ENCODE measurements at regions of chr5 and their contacts with region 1.

Region 1: GRCh38 chr5:134904630-134905245 is at the start of gene PCBD2:
- DNase-seq: peak; percentile 83 to 96 (median 90)
- ATAC-seq: peak; percentile 94
- H3K4me3 ChIP-seq: peak within 1 kb of the TSS; percentile 71
- H3K4me3 Mint-ChIP-seq: peak within 1 kb of the TSS; percentile 90 to 99 (median 96)
- H3K27ac ChIP-seq: peak within 1 kb of the TSS; percentile 90
- H3K27ac Mint-ChIP-seq: peak within 1 kb of the TSS; percentile 93 to 100 (median 99)
- H3K4me1 ChIP-seq: no peaks in the 10 kb centered on the region
- H3K4me1 Mint-ChIP-seq: peaks cover 0 to 25% (median 5%) of the 10 kb centered on the region in 7 donors
- H3K27me3 ChIP-seq: no peaks in the 10 kb centered on the region
- H3K27me3 Mint-ChIP-seq: no peaks in the 10 kb centered on the region
- total RNA-seq, gene PCBD2: 10.6 to 15.8 (median 14.3) TPM

Region 2: DNA sequence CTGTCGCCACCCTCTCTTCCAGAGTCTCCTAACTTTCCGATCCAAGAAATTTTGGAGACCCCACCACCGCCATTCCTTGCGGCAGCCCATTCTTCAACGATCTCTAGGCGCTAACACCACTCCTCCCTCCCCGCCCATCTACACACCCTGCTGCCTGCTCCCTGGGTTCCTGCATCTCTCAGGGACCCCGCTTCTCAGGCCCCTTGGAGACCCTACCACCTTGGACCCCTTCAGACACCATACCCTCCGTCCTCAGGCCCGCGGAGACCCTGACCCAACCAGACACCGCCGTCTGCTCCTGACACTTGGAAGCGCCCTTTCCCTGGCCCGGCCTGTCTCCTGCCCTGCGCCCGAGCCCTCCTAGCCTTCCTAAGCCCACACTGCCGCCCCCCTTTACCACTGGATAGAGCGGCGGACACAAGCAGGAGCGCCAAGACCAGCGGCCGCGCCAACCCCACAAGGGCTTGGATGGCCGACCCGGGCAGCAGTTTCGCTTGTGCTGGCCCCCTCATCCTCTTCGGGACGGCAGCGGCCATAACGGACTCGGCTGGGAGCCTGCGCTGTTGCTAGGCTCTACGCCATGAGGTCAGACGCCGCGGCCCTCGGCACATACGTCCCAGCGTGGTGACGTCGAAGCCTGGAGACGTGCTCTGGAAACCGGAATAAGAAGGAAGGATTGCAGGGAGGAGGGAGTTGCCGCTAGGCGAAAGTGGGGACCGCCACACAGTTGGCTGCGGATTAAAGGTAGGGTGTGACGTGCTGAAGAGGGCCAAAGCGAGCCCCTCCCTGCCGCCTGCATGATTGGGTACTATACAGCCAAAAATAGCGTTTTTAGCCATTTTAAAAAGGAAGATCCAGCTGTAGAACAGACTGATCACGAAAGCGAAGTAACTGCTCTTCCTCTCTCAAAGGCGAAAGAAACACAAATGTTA is 936.4 kb before region 1 on chr5 and contains the start of gene C5orf15:
- CTCF ChIA-PET with region 1: no interaction called
- POLR2A ChIA-PET with region 1: no interaction called
- intact Hi-C with region 1: loop called (anchors 2 to 10 kb)
- DNase-seq: peak; percentile 72 to 93 (median 87)
- ATAC-seq: peak; percentile 98
- H3K4me3 ChIP-seq: peak within 1 kb of the TSS; percentile 90
- H3K4me3 Mint-ChIP-seq: peak within 1 kb of the TSS; percentile 93 to 100 (median 98)
- H3K27ac ChIP-seq: peak within 1 kb of the TSS; percentile 94
- H3K27ac Mint-ChIP-seq: peak within 1 kb of the TSS; percentile 92 to 99 (median 97)
- H3K4me1 ChIP-seq: peaks cover 10 to 16% of the 10 kb centered on the region in 2 donors
- H3K4me1 Mint-ChIP-seq: peaks cover 21 to 63% (median 52%) of the 10 kb centered on the region in 7 donors
- H3K27me3 ChIP-seq: no peaks in the 10 kb centered on the region
- H3K27me3 Mint-ChIP-seq: no peaks in the 10 kb centered on the region
- total RNA-seq, gene C5orf15: 11.1 to 33.6 (median 17.9) TPM

Region 3: GRCh38 chr5:134586866-134587524 is 317.7 kb before region 1 on chr5:
- CTCF ChIA-PET with region 1: no interaction called
- POLR2A ChIA-PET with region 1: no interaction called
- intact Hi-C with region 1: loop called (anchors 2 kb)
- DNase-seq: peak; percentile 56 to 88 (median 76)
- ATAC-seq: peak; percentile 93
- H3K4me3 ChIP-seq: peak overlapping the region; percentile 11
- H3K4me3 Mint-ChIP-seq: peak overlapping the region in 8 of 10 donors; percentile 9 to 63 (median 25)
- H3K27ac ChIP-seq: no peak overlapping the region
- H3K27ac Mint-ChIP-seq: peak overlapping the region; percentile 22 to 84 (median 54)
- H3K4me1 ChIP-seq: peaks cover 4% of the 10 kb centered on the region in 2 donors
- H3K4me1 Mint-ChIP-seq: peaks cover 0 to 17% (median 9%) of the 10 kb centered on the region in 7 donors
- H3K27me3 ChIP-seq: no peaks in the 10 kb centered on the region
- H3K27me3 Mint-ChIP-seq: no peaks in the 10 kb centered on the region

Region 4: DNA sequence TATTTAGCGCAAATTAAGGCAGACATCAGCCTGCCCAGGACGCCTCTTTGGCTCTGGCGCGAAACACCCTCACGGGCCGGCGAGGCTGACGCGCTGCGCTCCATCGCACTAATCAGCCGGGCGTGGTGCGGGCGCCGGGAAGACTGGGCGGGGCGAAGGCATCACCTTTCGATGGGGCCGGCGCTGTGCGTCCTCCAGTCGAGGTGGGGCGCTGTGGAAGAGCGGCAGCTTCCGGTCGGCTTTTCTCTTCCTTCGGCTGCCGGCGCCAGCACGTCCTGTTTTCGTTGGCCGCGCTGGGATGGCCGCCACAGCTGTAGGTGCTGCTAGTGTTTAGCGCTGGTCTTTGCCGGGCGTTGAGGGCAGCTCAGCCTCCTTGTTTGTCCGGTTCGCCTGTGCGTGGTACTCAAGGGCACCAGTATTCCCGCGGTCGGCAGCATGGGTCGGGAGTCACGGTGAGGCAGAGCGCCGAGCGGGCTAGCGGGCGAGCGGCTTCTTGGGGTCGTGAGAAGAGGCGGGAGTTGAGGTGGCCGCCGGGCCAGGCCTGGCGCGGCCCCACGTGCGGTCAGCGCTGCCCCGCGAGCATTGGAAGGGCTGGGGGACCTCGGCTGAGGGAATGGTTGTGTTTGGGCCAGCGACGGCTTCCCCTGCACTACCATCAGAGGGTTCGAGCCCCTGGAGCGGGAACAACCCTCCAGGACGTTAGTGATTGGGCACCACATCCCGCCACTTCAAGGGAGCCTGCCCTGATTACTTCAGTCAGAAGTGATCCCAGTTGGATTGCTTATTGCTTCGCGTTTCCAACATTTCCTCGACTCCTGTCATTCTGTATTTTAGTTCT is 146.0 kb before region 1 on chr5 and contains the start of gene DDX46:
- CTCF ChIA-PET with region 1: interaction called, 4 read pairs
- POLR2A ChIA-PET with region 1: interaction called, 3 read pairs
- intact Hi-C with region 1: loop called (anchors 1 kb)
- DNase-seq: peak; percentile 85 to 95 (median 91)
- ATAC-seq: peak; percentile 99
- H3K4me3 ChIP-seq: peak within 1 kb of the TSS; percentile 75
- H3K4me3 Mint-ChIP-seq: peak within 1 kb of the TSS; percentile 92 to 100 (median 99)
- H3K27ac ChIP-seq: peak within 1 kb of the TSS; percentile 87
- H3K27ac Mint-ChIP-seq: peak within 1 kb of the TSS; percentile 93 to 99 (median 97)
- H3K4me1 ChIP-seq: peaks cover 12 to 13% of the 10 kb centered on the region in 2 donors
- H3K4me1 Mint-ChIP-seq: peaks cover 20 to 47% (median 38%) of the 10 kb centered on the region in 7 donors
- H3K27me3 ChIP-seq: no peaks in the 10 kb centered on the region
- H3K27me3 Mint-ChIP-seq: no peaks in the 10 kb centered on the region
- total RNA-seq, gene DDX46: 51.2 to 72.5 (median 64.2) TPM

Region 5: GRCh38 chr5:134845852-134846640 is 58.7 kb before region 1 on chr5 and contains the start of gene C5orf24:
- CTCF ChIA-PET with region 1: interaction called, 6 read pairs
- POLR2A ChIA-PET with region 1: interaction called, 37 read pairs
- intact Hi-C with region 1: loop called (anchors 1 kb)
- DNase-seq: peak; percentile 83 to 93 (median 90)
- ATAC-seq: peak; percentile 98
- H3K4me3 ChIP-seq: peak within 1 kb of the TSS; percentile 60
- H3K4me3 Mint-ChIP-seq: peak within 1 kb of the TSS; percentile 84 to 99 (median 94)
- H3K27ac ChIP-seq: peak within 1 kb of the TSS; percentile 96
- H3K27ac Mint-ChIP-seq: peak within 1 kb of the TSS; percentile 94 to 99 (median 97)
- H3K4me1 ChIP-seq: peaks cover 16 to 19% of the 10 kb centered on the region in 2 donors
- H3K4me1 Mint-ChIP-seq: peaks cover 12 to 42% (median 31%) of the 10 kb centered on the region in 7 donors
- H3K27me3 ChIP-seq: no peaks in the 10 kb centered on the region
- H3K27me3 Mint-ChIP-seq: no peaks in the 10 kb centered on the region
- total RNA-seq, gene C5orf24: 20.3 to 42.7 (median 37.9) TPM

Region 6: GRCh38 chr5:134873987-134874830 is 30.5 kb before region 1 on chr5 and contains the start of gene TXNDC15:
- CTCF ChIA-PET with region 1: interaction called, 4 read pairs
- POLR2A ChIA-PET with region 1: interaction called, 31 read pairs
- intact Hi-C with region 1: loop called (anchors 1 kb)
- DNase-seq: peak; percentile 69 to 86 (median 78)
- ATAC-seq: peak; percentile 98
- H3K4me3 ChIP-seq: peak within 1 kb of the TSS; percentile 95
- H3K4me3 Mint-ChIP-seq: peak within 1 kb of the TSS; percentile 89 to 98 (median 94)
- H3K27ac ChIP-seq: peak within 1 kb of the TSS; percentile 88
- H3K27ac Mint-ChIP-seq: peak within 1 kb of the TSS; percentile 91 to 97 (median 95)
- H3K4me1 ChIP-seq: peaks cover 16 to 32% of the 10 kb centered on the region in 2 donors
- H3K4me1 Mint-ChIP-seq: peaks cover 31 to 51% (median 45%) of the 10 kb centered on the region in 7 donors
- H3K27me3 ChIP-seq: no peaks in the 10 kb centered on the region
- H3K27me3 Mint-ChIP-seq: no peaks in the 10 kb centered on the region
- total RNA-seq, gene TXNDC15: 24.2 to 71.3 (median 36.8) TPM

Region 7: DNA sequence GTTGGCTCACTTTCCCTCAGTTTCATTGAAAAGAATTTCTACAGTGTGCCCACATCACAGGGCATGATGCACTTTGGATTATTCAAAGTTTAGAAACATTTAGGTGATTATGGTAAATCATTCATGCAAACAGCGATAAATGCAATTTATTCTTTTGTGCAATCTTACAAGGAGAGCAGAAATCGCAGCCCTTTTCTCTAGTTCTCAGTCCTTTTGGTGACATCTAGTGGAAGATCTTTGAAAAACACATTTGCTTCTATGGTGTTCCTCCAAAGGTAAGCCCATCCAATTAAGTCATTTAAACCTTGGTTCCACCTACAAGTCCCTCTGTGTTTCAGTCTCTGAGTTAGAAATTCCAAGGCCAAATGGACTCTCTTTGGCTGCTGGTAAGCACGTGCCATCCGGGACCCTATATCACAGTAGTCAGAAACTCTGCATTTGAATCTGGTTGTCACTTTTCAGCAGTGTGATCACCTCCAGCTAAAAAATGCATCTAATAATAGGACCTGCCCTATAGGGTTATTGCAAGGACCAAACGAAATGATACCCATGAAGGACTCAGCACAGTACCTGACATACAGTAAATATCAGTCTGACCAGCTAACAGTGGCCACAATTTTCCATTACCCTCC is 427.9 kb after region 1 on chr5:
- CTCF ChIA-PET with region 1: no interaction called
- POLR2A ChIA-PET with region 1: no interaction called
- intact Hi-C with region 1: loop called in 1 of 2 experiments (anchors 1 kb)
- DNase-seq: peak in 6 of 9 donors; percentile 14 to 52 (median 46)
- ATAC-seq: no peak
- H3K4me3 ChIP-seq: no peak overlapping the region
- H3K4me3 Mint-ChIP-seq: no peak overlapping the region
- H3K27ac ChIP-seq: no peak overlapping the region
- H3K27ac Mint-ChIP-seq: no peak overlapping the region
- H3K4me1 ChIP-seq: no peaks in the 10 kb centered on the region
- H3K4me1 Mint-ChIP-seq: peaks cover 0 to 27% (median 0%) of the 10 kb centered on the region in 7 donors
- H3K27me3 ChIP-seq: no peaks in the 10 kb centered on the region
- H3K27me3 Mint-ChIP-seq: no peaks in the 10 kb centered on the region

Measured in naive thymus-derived CD4-positive, alpha-beta T cell (primary cell).